GM12878 (cell line): ENCODE measurements at regions of chr10 and their contacts with region 1.

Region 1: GRCh38 chr10:76984559-76985443 is 652.8 kb downstream of the KCNMA1 start:
- DNase-seq: no peak
- ATAC-seq: peak; percentile 97
- H3K4me3 ChIP-seq: no peak overlapping the region
- H3K27ac ChIP-seq: no peak overlapping the region
- H3K4me1 ChIP-seq: no peaks in the 10 kb centered on the region
- H3K27me3 ChIP-seq: no peaks in the 10 kb centered on the region; a peak in 1 of 4 replicates
- CTCF ChIP-seq: peak; percentile 87 to 94 (median 91)
- EP300 ChIP-seq: no peak
- POLR2A ChIP-seq: no peak
- RAD21 ChIP-seq: peak; percentile 73

Region 2: DNA sequence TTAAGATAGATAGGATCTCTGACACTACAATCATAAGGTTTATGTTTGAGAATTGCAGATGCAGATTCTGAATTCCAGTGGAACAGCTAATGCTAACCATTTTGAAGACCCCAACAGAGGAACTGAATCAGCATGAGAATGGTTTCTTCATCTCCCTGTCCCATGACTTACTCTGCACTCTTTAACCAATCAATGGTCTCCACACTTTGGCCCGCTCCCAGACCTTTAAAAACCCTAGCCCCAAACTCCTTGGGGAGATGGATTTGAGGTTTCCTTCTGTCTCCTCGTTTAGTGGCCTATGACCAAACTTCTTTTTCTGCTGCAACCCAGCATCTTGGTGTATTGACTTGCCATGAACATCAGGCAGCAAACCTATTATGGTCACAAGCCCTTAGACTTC is 748.4 kb before region 1 on chr10:
- CTCF ChIA-PET with region 1: no interaction called
- POLR2A ChIA-PET with region 1: no interaction called
- RAD21 ChIA-PET with region 1: no interaction called
- SMC1A ChIA-PET with region 1: no interaction called
- in situ Hi-C with region 1: no loop called
- intact Hi-C with region 1: loop called (anchors 5 kb)
- DNase-seq: no peak
- ATAC-seq: no peak
- H3K4me3 ChIP-seq: no peak overlapping the region
- H3K27ac ChIP-seq: no peak overlapping the region
- H3K4me1 ChIP-seq: no peaks in the 10 kb centered on the region
- H3K27me3 ChIP-seq: no peaks in the 10 kb centered on the region
- CTCF ChIP-seq: no peak
- EP300 ChIP-seq: no peak
- POLR2A ChIP-seq: no peak
- RAD21 ChIP-seq: no peak

Region 3: DNA sequence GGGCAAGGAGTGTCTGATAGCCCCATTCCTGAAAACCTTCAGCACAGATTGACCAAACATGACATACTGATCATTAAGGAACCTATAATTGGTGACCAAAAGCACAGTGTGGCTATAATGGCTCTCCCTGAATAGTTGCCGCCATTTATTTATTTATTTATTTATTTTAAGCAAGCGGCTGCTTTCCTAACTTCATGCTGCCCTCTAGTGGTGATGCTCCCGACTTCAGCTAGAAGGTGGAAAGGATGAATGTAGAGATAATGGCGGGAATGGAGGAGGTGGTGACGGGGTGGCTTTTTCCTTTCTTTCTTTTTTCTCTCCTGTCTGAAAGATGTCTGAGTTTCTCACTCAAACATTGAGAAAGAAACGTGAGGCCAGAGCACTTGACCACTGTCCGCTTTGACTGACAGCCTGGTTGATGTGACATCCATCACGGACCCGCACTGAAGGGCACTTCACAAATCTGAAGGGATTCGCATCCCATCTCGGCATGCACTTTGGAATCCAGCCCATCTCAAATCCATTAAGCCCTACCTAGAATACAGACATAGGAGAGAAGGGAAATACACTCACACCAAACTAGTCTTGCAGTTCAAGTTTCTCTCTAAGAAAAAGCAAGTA is 437.3 kb before region 1 on chr10:
- CTCF ChIA-PET with region 1: interaction called, 9 read pairs
- POLR2A ChIA-PET with region 1: no interaction called
- RAD21 ChIA-PET with region 1: interaction called, 3 read pairs
- SMC1A ChIA-PET with region 1: interaction called, 6 read pairs
- in situ Hi-C with region 1: loop called (anchors 5 kb)
- intact Hi-C with region 1: loop called (anchors 2 kb)
- DNase-seq: no peak
- ATAC-seq: peak; percentile 77
- H3K4me3 ChIP-seq: no peak overlapping the region
- H3K27ac ChIP-seq: no peak overlapping the region
- H3K4me1 ChIP-seq: no peaks in the 10 kb centered on the region
- H3K27me3 ChIP-seq: no peaks in the 10 kb centered on the region
- CTCF ChIP-seq: peak; percentile 62 to 65 (median 65)
- EP300 ChIP-seq: no peak
- POLR2A ChIP-seq: no peak
- RAD21 ChIP-seq: peak; percentile 79

Region 4: DNA sequence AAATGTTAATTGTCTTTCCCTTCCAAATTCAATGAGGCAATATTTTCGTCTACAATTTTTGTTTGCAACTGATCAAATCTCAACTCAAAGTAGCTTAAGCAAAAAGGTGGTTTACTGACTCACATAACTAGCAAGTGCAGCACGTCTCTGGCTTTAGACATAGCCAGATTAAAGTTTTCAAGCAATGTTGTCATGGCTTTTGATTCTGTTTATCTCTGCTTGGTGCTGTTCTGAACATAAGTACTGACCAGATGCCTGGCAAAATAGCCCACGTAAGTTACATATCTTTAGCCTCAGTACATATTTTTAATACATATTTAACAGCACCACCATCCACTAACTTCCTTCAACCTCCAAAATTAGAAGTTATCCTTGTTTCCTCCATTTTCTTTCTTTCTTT is 225.1 kb before region 1 on chr10:
- CTCF ChIA-PET with region 1: no interaction called
- POLR2A ChIA-PET with region 1: no interaction called
- RAD21 ChIA-PET with region 1: no interaction called
- SMC1A ChIA-PET with region 1: no interaction called
- in situ Hi-C with region 1: no loop called
- intact Hi-C with region 1: loop called (anchors 10 kb)
- DNase-seq: no peak
- ATAC-seq: no peak
- H3K4me3 ChIP-seq: no peak overlapping the region
- H3K27ac ChIP-seq: no peak overlapping the region
- H3K4me1 ChIP-seq: no peaks in the 10 kb centered on the region
- H3K27me3 ChIP-seq: no peaks in the 10 kb centered on the region
- CTCF ChIP-seq: no peak
- EP300 ChIP-seq: no peak
- POLR2A ChIP-seq: no peak
- RAD21 ChIP-seq: no peak

Region 5: DNA sequence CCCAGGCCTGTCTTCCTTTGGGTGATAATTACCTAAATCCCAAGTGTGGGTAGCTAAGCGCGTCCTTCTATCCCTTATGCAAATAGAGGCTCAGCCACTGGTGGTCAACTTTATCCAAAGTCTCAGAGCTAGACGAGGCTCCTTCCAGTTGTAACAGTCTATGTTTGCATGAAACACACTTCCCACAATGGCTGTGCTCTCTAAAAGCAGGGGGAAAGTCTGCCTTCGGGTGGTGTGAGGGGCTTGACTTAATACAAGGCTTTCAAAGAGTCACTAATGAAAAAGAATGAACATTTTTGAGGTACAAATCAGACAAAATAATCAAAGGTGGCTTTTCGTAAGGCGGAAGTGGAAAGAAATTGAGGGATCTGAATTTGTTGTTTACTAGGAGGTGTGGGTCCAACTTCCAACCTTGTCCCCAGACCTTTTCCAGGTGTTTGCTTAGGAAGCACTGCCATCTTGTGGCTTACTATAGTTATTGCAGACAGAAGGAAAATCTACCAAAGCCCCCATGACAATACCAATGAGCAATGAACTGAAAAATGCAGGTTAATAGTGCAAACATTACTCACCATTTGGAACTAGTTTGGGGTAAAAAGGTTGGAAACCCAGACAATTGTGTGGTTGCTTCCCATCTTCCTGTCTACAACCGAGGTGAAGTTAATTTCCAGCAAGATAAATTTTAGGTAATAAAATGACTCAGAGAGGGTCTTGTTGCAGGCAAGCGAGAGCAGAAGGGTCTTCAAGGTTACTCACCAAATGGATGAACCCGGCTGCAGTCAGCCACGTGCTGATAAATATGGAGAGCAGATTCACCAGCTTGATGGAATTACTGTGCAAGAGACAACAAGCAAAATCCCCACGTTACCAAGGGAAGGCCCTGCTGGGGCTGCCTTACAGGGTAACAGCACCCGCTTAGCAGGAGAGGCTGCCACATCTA is 127.1 kb after region 1 on chr10:
- CTCF ChIA-PET with region 1: interaction called, 3 read pairs
- POLR2A ChIA-PET with region 1: no interaction called
- RAD21 ChIA-PET with region 1: interaction called, 3 read pairs
- SMC1A ChIA-PET with region 1: interaction called, 3 read pairs
- in situ Hi-C with region 1: no loop called
- intact Hi-C with region 1: loop called (anchors 5 kb)
- DNase-seq: peak; percentile 13
- ATAC-seq: peak; percentile 82
- H3K4me3 ChIP-seq: no peak overlapping the region
- H3K27ac ChIP-seq: no peak overlapping the region
- H3K4me1 ChIP-seq: no peaks in the 10 kb centered on the region
- H3K27me3 ChIP-seq: no peaks in the 10 kb centered on the region
- CTCF ChIP-seq: peak; percentile 70 to 76 (median 73); a peak in 5 of 6 replicates
- EP300 ChIP-seq: no peak
- POLR2A ChIP-seq: no peak
- RAD21 ChIP-seq: peak; percentile 83